ENCODE measurements at regions of chr5 and their contacts with region 1.

Region 1: GRCh38 chr5:139197710-139198669 is at the start of gene SIL1:
- DNase-seq: peak; percentile 96
- ATAC-seq: peak; percentile 98
- H3K4me3 ChIP-seq: peak within 1 kb of the TSS; percentile 56 to 90 (median 71)
- H3K4me3 Mint-ChIP-seq: peak within 1 kb of the TSS; percentile 88
- H3K27ac ChIP-seq: peak within 1 kb of the TSS; percentile 81 to 96
- H3K27ac Mint-ChIP-seq: peak within 1 kb of the TSS; percentile 87
- H3K4me1 ChIP-seq: peaks cover 17 to 21% of the 10 kb centered on the region in 2 donors
- H3K4me1 Mint-ChIP-seq: peaks cover 19% of the 10 kb centered on the region
- H3K27me3 ChIP-seq: no peaks in the 10 kb centered on the region
- H3K27me3 Mint-ChIP-seq: no peaks in the 10 kb centered on the region
- CTCF ChIP-seq: no peak
- total RNA-seq, gene SIL1: 17.9 and 19.8 TPM in 2 replicates

Region 2: GRCh38 chr5:139273572-139274289 is 75.7 kb after region 1 on chr5:
- CTCF ChIA-PET with region 1: interaction called, 3 read pairs
- POLR2A ChIA-PET with region 1: interaction called, 6 read pairs
- intact Hi-C with region 1: loop called (anchors 1 kb)
- DNase-seq: peak; percentile 95
- ATAC-seq: peak; percentile 98
- H3K4me3 ChIP-seq: peak overlapping the region; percentile 61 to 86 (median 75)
- H3K4me3 Mint-ChIP-seq: peak overlapping the region; percentile 92
- H3K27ac ChIP-seq: peak overlapping the region; percentile 62 to 74
- H3K27ac Mint-ChIP-seq: peak overlapping the region; percentile 91
- H3K4me1 ChIP-seq: peaks cover 32 to 44% of the 10 kb centered on the region in 2 donors
- H3K4me1 Mint-ChIP-seq: peaks cover 46% of the 10 kb centered on the region
- H3K27me3 ChIP-seq: no peaks in the 10 kb centered on the region
- H3K27me3 Mint-ChIP-seq: no peaks in the 10 kb centered on the region
- CTCF ChIP-seq: no peak

Region 3: GRCh38 chr5:139403787-139404483 is 205.9 kb after region 1 on chr5 and contains the start of gene SPATA24:
- CTCF ChIA-PET with region 1: no interaction called
- POLR2A ChIA-PET with region 1: no interaction called
- intact Hi-C with region 1: loop called (anchors 1 kb)
- DNase-seq: peak; percentile 99
- ATAC-seq: peak; percentile 85
- H3K4me3 ChIP-seq: peak within 1 kb of the TSS; percentile 50 to 73 (median 68)
- H3K4me3 Mint-ChIP-seq: peak within 1 kb of the TSS; percentile 95
- H3K27ac ChIP-seq: peak within 1 kb of the TSS; percentile 85 to 86
- H3K27ac Mint-ChIP-seq: peak within 1 kb of the TSS; percentile 97
- H3K4me1 ChIP-seq: peaks cover 33 to 43% of the 10 kb centered on the region in 2 donors
- H3K4me1 Mint-ChIP-seq: peaks cover 43% of the 10 kb centered on the region
- H3K27me3 ChIP-seq: no peaks in the 10 kb centered on the region
- H3K27me3 Mint-ChIP-seq: no peaks in the 10 kb centered on the region
- CTCF ChIP-seq: no peak
- total RNA-seq, gene SPATA24: 6.4 and 8.2 TPM in 2 replicates

Measured in B cell (primary cell).